ENCODE measurements at regions of chr1 and their contacts with region 1.

Region 1: DNA sequence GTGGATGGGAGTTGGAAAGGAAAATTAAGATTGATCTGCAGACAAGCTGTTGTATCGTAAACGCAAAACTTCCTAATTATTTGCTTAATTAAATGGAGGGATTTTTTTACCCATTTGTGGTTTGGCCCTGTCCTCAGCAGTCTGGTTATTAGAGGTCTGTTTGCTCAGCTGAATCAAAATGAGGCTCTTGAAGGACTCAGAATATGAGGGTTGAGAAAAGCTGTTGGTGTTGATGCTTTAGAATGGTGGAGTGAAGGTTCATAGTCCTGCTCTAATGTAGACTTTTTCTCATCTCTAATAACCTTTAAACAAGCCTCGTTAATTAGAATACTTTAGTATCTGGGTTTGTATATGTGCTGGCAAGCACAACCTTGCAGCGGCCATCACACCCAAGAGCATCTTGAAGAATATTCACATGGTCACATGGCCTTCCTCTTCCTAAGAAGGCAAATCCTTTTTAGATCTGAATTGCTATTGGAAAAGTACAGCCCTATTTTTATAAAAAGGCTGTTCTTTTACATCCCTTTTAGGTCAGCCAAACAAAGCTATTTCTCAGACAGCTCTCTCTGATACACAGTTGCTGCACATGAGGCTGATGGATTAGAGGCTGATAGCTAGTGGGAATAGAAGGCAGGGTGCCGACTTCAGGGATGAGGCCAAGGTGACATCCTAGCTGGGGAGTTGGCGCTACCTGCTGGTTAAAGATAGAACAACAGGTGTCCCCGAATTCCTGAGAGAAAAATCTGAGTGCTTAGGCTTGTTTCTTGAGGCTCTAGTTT is 53.8 kb downstream of the MACF1 start:
- DNase-seq: peak in 1 of 2 donors; percentile 82
- H3K4me3 ChIP-seq: no peak overlapping the region
- H3K27ac ChIP-seq: peak overlapping the region; percentile 25 to 55
- H3K4me1 ChIP-seq: peaks cover 0 to 10% of the 10 kb centered on the region in 2 donors
- H3K27me3 ChIP-seq: no peaks in the 10 kb centered on the region
- CTCF ChIP-seq: peak; percentile 78 to 86 (median 85)

Region 2: GRCh38 chr1:39105061-39105840 is 153.1 kb before region 1 on chr1:
- intact Hi-C with region 1: loop called (anchors 2 kb)
- DNase-seq: peak in 1 of 2 donors; percentile 84
- H3K4me3 ChIP-seq: peak overlapping the region; percentile 70 to 95
- H3K27ac ChIP-seq: peak overlapping the region; percentile 86 to 95
- H3K4me1 ChIP-seq: peaks cover 3 to 37% of the 10 kb centered on the region in 2 donors
- H3K27me3 ChIP-seq: no peaks in the 10 kb centered on the region
- CTCF ChIP-seq: no peak

Region 3: GRCh38 chr1:39132505-39133339 is 125.6 kb before region 1 on chr1:
- intact Hi-C with region 1: loop called (anchors 2 kb)
- DNase-seq: peak; percentile 11 to 89
- H3K4me3 ChIP-seq: peak overlapping the region in 1 of 2 donors; percentile 39
- H3K27ac ChIP-seq: peak overlapping the region; percentile 71 to 73
- H3K4me1 ChIP-seq: peaks cover 4 to 33% of the 10 kb centered on the region in 2 donors
- H3K27me3 ChIP-seq: no peaks in the 10 kb centered on the region
- CTCF ChIP-seq: peak in 2 of 3 experiments; percentile 29 to 53

Region 4: GRCh38 chr1:39189592-39190041 is 68.7 kb before region 1 on chr1:
- intact Hi-C with region 1: loop called (anchors 5 kb)
- DNase-seq: no peak
- H3K4me3 ChIP-seq: no peak overlapping the region
- H3K27ac ChIP-seq: peak overlapping the region; percentile 59 to 90
- H3K4me1 ChIP-seq: peaks cover 15 to 36% of the 10 kb centered on the region in 2 donors
- H3K27me3 ChIP-seq: no peaks in the 10 kb centered on the region
- CTCF ChIP-seq: no peak

Region 5: DNA sequence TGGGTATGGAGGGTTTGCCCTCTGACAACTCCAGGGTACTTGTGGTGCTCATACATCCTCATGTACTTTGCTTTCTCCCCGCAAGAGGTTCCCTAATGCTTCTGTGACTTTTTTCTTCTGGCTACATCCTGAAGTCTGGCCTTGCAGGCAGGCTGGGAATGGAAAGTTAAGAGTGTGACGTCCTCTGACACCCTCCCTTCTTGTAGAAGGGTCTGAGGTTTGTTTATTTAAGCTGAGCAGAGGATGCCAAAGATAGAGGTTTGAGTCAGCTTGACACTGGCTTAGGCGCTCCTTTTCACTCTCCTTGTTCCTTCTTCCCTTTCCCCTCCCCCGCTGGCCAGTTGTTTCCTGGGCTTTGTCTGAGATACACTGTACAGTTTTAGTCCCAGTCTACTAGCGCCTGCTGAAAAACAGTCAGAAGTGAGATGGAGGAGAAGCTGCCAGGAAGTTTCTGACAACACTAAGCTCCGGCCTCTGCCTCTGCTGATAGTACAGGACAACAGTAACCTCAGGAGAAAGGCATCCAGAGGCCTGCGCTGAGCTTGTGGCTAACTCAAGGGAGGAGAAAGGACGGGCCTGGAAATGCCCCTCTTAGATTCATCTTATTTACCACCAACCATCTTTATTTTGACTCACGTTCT is 53.8 kb before region 1 on chr1 and contains the start of gene MACF1:
- intact Hi-C with region 1: loop called (anchors 2 kb)
- DNase-seq: peak; percentile 55 to 90
- H3K4me3 ChIP-seq: peak within 1 kb of the TSS; percentile 40 to 69
- H3K27ac ChIP-seq: peak within 1 kb of the TSS; percentile 82 to 93
- H3K4me1 ChIP-seq: peaks cover 0 to 23% of the 10 kb centered on the region in 2 donors
- H3K27me3 ChIP-seq: no peaks in the 10 kb centered on the region
- CTCF ChIP-seq: peak; percentile 63 to 76 (median 67)
- total RNA-seq, gene MACF1: 279 TPM

Region 6: DNA sequence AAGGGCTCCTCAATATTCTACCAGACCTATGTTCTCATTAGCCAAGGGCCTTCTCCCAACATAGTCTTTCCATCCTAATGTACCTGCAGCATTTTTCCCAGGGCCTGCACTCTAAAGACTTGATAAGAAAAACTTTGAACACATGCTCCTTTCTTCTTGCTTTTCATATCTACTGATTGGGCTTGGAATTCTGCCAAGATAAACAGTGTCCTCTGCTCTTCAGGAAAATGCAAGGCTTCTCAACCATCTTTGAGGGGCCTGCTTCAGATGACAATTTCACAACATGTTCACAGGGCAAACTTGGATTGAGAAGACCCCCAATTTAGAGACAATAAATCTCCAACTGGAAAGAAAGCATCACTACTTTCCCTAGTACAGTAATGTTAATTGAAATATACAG is 864.5 kb after region 1 on chr1:
- intact Hi-C with region 1: no loop called
- DNase-seq: no peak
- H3K4me3 ChIP-seq: no peak overlapping the region
- H3K27ac ChIP-seq: no peak overlapping the region
- H3K4me1 ChIP-seq: no peaks in the 10 kb centered on the region
- H3K27me3 ChIP-seq: no peaks in the 10 kb centered on the region
- CTCF ChIP-seq: no peak

Measured in ascending aorta (tissue), 2 donors.